Activated T-helper 2 cell treated with anti-CD3 and anti-CD28 coated beads, Interferon-gamma antibody, Interleukin-2, Interleukin-4, amounts not matched to agents 10 μg/mL and 5 μg/mL and 100 μg/mL, durations not matched to agents 14 hours and 24 hours and 36 hours (primary cell): ENCODE measurements at regions of chr5 and their contacts with region 1.

Region 1: GRCh38 chr5:135887351-135887864 is 8.2 kb downstream of the IL9 start:
- DNase-seq: peak; percentile 57
- H3K4me3 Mint-ChIP-seq: no peak overlapping the region
- H3K27ac Mint-ChIP-seq: no peak overlapping the region
- H3K4me1 Mint-ChIP-seq: peaks cover 15% of the 10 kb centered on the region
- H3K27me3 Mint-ChIP-seq: peaks cover 33% of the 10 kb centered on the region

Region 2: GRCh38 chr5:135913713-135914626 is 26.6 kb after region 1 on chr5:
- intact Hi-C with region 1: loop called (anchors 1 kb)
- DNase-seq: peak; percentile 14
- H3K4me3 Mint-ChIP-seq: no peak overlapping the region
- H3K27ac Mint-ChIP-seq: peak overlapping the region; percentile 33
- H3K4me1 Mint-ChIP-seq: peaks cover 36% of the 10 kb centered on the region
- H3K27me3 Mint-ChIP-seq: peaks cover 57% of the 10 kb centered on the region

Region 3: GRCh38 chr5:135944967-135945560 is 57.7 kb after region 1 on chr5:
- intact Hi-C with region 1: loop called (anchors 1 kb)
- DNase-seq: no peak
- H3K4me3 Mint-ChIP-seq: no peak overlapping the region
- H3K27ac Mint-ChIP-seq: no peak overlapping the region
- H3K4me1 Mint-ChIP-seq: no peaks in the 10 kb centered on the region
- H3K27me3 Mint-ChIP-seq: peaks cover 31% of the 10 kb centered on the region

Region 4: DNA sequence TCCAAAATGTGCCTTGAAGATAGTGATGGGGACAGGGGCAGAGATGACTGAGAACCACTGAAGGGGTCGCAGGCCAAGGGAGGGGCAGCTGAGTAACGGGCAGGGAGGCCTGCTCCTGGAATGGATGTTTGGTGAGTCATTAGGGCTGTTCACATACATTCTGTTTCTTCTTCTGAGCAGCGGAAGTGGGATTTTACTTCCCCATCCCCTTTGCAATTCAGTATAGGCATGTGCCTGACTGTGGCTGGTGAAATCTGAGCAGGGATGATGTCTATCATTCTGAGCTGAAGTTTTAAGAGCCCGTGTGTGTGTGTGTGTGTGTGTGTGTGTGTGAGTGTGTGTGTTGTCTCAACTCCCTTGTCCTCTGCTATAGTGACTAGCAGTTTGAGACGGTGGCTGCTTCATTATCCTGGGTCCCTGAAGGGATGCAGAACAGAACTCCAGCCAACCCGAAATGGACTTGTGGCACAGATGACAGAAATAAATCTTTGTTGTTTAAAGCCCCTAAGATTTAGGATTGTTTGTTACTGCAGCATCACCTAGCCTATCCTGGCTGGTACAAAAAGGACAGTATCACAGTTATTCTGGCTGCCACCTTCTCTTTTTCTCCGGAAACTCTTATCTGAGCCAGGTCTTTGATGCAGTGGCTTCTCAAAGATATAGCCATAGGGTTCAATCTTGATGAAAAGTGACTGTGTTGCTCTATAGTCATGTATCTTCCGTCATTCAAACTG is 112.2 kb after region 1 on chr5:
- intact Hi-C with region 1: no loop called
- DNase-seq: no peak
- H3K4me3 Mint-ChIP-seq: no peak overlapping the region
- H3K27ac Mint-ChIP-seq: no peak overlapping the region
- H3K4me1 Mint-ChIP-seq: no peaks in the 10 kb centered on the region
- H3K27me3 Mint-ChIP-seq: peaks cover 3% of the 10 kb centered on the region

Region 5: DNA sequence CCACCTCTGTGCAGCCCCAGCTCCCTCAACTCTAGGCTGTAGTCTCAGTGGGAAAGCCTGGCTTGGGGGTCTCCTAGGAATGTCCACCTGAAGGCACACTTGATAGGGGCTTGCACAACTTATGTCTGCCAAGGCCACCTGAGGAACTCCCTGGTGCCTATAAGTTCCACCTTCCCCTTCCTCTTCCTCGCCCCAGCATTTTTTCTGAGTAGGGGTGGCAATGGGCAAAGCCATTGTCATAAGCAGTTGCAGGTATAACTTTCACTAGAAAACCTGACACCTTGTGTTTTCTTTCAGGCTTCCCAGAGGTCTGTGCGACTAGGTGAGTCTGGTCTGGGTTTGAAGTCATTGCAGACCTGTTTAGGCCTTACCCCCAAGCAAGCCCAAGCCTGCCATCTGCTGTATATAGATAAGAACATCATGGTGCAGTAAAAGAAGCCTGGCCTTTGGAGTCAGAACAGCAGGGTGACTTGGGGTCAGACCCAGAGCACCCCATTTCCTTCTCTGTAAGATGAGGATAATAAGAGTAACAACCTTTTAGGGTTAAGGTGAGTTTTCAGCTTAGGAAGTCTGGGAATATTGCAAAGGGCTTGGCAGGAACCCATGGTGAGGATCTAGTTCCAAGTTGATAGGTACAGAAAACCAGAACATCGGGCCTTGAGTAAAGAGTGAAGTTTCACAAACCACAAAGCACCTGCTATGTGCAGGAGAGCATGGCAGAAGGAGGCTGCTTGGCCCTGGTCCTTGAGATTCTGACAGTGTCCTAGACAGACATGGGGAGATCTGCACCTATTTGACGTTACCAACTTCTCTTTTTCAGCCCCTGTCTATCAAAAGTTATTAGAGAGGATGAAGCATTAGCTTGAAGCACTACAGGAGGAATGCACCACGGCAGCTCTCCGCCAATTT is 175.2 kb after region 1 on chr5:
- intact Hi-C with region 1: loop called (anchors 1 kb)
- DNase-seq: no peak
- H3K4me3 Mint-ChIP-seq: no peak overlapping the region
- H3K27ac Mint-ChIP-seq: no peak overlapping the region
- H3K4me1 Mint-ChIP-seq: no peaks in the 10 kb centered on the region
- H3K27me3 Mint-ChIP-seq: peaks cover 7% of the 10 kb centered on the region

Region 6: GRCh38 chr5:136174021-136174659 is 286.7 kb after region 1 on chr5:
- intact Hi-C with region 1: loop called (anchors 1 kb)
- DNase-seq: no peak
- H3K4me3 Mint-ChIP-seq: no peak overlapping the region
- H3K27ac Mint-ChIP-seq: no peak overlapping the region
- H3K4me1 Mint-ChIP-seq: no peaks in the 10 kb centered on the region
- H3K27me3 Mint-ChIP-seq: no peaks in the 10 kb centered on the region